IMR-90 (cell line): ENCODE measurements at regions of chr21 and their contacts with region 1.

Region 1: GRCh38 chr21:17387030-17387617 is 125.7 kb upstream of the CXADR start:
- DNase-seq: peak; percentile 59
- ATAC-seq: peak; percentile 64
- H3K4me3 ChIP-seq: no peak overlapping the region
- H3K27ac ChIP-seq: no peak overlapping the region
- H3K4me1 ChIP-seq: no peaks in the 10 kb centered on the region
- H3K27me3 ChIP-seq: no peaks in the 10 kb centered on the region
- CTCF ChIP-seq: peak; percentile 87
- POLR2A ChIP-seq: no peak
- RAD21 ChIP-seq: peak; percentile 88

Region 2: DNA sequence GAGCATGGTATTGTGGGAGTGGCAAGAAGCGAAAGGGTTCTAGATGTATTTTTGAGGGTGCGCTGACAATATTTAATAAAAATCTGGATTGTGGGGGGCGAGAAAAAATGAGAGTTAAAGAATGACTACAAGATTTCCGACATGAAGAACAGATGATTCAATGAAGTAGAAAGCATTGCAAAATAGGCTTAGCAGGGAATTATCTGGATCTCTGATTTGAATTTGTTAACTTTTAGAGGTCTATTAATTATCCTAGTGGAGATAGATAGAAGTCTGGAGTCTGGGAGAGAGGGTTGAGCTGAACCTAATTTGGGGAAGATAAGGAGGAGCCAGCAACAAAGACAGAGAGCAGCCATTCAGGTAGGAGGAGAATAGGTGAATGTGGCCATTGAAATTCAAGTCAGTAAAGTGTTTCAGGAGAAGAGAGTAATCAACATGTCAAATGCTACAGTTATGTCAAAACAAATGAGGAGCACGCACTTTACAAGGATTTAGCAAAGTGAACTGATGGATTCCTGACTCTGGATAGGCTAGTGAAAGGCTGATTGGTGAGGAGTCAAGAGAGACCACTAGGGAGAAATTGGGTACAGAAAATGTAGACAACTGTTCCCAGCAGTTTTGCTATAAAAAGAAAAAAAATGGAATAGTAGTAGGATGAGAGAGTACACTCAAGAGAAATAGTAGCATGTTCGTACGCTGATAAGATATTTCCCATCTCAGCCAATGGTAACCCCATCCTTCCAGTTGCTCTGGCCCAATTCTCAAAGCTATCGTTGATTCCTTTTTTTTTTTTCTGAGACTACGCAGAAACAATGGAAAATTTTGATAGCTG is 267.4 kb before region 1 on chr21:
- CTCF ChIA-PET with region 1: no interaction called
- POLR2A ChIA-PET with region 1: no interaction called
- dilution Hi-C with region 1: no loop called
- in situ Hi-C with region 1: no loop called
- intact Hi-C with region 1: no loop called
- DNase-seq: no peak
- ATAC-seq: no peak
- H3K4me3 ChIP-seq: no peak overlapping the region
- H3K27ac ChIP-seq: no peak overlapping the region
- H3K4me1 ChIP-seq: no peaks in the 10 kb centered on the region
- H3K27me3 ChIP-seq: no peaks in the 10 kb centered on the region
- CTCF ChIP-seq: no peak
- POLR2A ChIP-seq: no peak
- RAD21 ChIP-seq: no peak

Region 3: GRCh38 chr21:17554679-17555465 is 167.7 kb after region 1 on chr21:
- CTCF ChIA-PET with region 1: interaction called, 26 read pairs
- POLR2A ChIA-PET with region 1: interaction called, 3 read pairs
- dilution Hi-C with region 1: no loop called
- in situ Hi-C with region 1: no loop called
- intact Hi-C with region 1: loop called (anchors 1 kb)
- DNase-seq: peak; percentile 10
- ATAC-seq: peak; percentile 69
- H3K4me3 ChIP-seq: no peak overlapping the region
- H3K27ac ChIP-seq: no peak overlapping the region
- H3K4me1 ChIP-seq: no peaks in the 10 kb centered on the region
- H3K27me3 ChIP-seq: no peaks in the 10 kb centered on the region
- CTCF ChIP-seq: peak; percentile 35
- POLR2A ChIP-seq: no peak
- RAD21 ChIP-seq: peak; percentile 41; the same call in 1 of the 2 replicates

Region 4: GRCh38 chr21:17580319-17580718 is 193.2 kb after region 1 on chr21:
- CTCF ChIA-PET with region 1: interaction called, 28 read pairs
- POLR2A ChIA-PET with region 1: no interaction called
- dilution Hi-C with region 1: no loop called
- in situ Hi-C with region 1: loop called (anchors 5 kb)
- intact Hi-C with region 1: no loop called
- DNase-seq: no peak
- ATAC-seq: no peak
- H3K4me3 ChIP-seq: no peak overlapping the region
- H3K27ac ChIP-seq: no peak overlapping the region
- H3K4me1 ChIP-seq: no peaks in the 10 kb centered on the region
- H3K27me3 ChIP-seq: no peaks in the 10 kb centered on the region; the same call in none of the 2 replicates
- CTCF ChIP-seq: no peak
- POLR2A ChIP-seq: no peak
- RAD21 ChIP-seq: no peak

Region 5: DNA sequence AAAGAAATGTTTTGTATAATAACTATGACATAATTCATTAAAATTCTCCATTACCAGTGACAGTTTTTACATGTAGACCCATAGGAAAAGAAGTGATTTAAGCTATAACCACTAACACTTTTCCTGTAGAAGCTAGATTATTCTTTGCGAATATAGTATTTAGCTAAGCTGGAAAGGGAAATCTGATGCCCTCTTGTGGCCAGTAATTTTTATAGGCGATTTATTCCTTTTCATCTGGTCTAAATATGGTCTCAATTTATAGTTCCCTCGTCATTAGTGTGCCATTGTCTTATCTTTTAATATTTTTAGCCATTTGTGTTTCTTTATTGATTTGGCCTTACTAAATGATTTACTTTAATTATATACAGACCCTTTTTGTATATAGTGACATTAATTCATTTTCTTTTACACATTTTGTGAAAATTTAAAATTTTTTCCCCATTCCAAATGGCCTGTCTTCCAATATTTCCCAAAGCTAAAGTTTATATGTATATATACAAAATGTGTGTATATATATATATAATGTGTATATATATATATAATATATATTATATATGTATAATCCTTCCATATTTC is 198.8 kb after region 1 on chr21:
- CTCF ChIA-PET with region 1: interaction called, 28 read pairs
- POLR2A ChIA-PET with region 1: no interaction called
- dilution Hi-C with region 1: no loop called
- in situ Hi-C with region 1: loop called (anchors 5 kb)
- intact Hi-C with region 1: loop called (anchors 1 kb)
- DNase-seq: peak; percentile 62
- ATAC-seq: peak; percentile 76
- H3K4me3 ChIP-seq: no peak overlapping the region
- H3K27ac ChIP-seq: no peak overlapping the region
- H3K4me1 ChIP-seq: no peaks in the 10 kb centered on the region
- H3K27me3 ChIP-seq: no peaks in the 10 kb centered on the region; the same call in 1 of the 2 replicates
- CTCF ChIP-seq: peak; percentile 74
- POLR2A ChIP-seq: no peak
- RAD21 ChIP-seq: peak; percentile 75